Naive thymus-derived CD4-positive, alpha-beta T cell (primary cell): ENCODE measurements at regions of chr10 and their contacts with region 1.

Region 1: DNA sequence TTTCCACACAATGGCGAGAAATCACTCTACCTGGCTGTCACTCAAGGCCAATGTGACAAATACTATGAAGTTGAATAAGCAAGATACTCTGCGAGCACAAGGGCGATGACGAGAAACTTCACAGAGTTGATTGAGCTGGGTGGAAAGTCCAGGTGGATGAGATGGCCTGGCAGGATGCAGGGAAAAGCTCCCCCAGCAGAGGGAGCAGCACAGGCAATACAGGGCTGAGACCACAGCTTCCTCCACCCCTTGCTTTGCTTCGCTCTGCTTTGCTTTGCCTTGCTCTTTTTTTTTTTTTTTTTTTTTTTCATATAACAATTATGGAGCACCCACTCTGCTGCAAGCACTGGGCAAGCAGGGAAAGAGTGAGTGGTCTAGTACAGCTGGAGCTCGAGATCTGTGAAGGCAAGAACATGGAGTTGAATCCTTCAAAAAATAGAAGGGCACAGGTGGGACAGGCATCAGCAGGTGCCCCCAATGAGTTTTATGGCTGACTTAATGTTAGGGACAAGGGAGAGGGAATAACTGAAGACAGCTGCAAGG is 88.3 kb downstream of the CABCOCO1 start:
- DNase-seq: peak; percentile 37 to 67 (median 58)
- ATAC-seq: peak; percentile 94
- H3K4me3 ChIP-seq: no peak overlapping the region
- H3K4me3 Mint-ChIP-seq: peak overlapping the region in 6 of 10 donors; percentile 6 to 58 (median 36)
- H3K27ac ChIP-seq: no peak overlapping the region
- H3K27ac Mint-ChIP-seq: peak overlapping the region in 4 of 9 donors; percentile 10 to 88 (median 48)
- H3K4me1 ChIP-seq: peaks cover 12 to 15% of the 10 kb centered on the region in 2 donors
- H3K4me1 Mint-ChIP-seq: peaks cover 0 to 29% (median 26%) of the 10 kb centered on the region in 7 donors
- H3K27me3 ChIP-seq: no peaks in the 10 kb centered on the region
- H3K27me3 Mint-ChIP-seq: peaks cover 0 to 4% (median 0%) of the 10 kb centered on the region in 5 donors

Region 2: GRCh38 chr10:61765176-61766087 is 14.4 kb after region 1 on chr10:
- CTCF ChIA-PET with region 1: interaction called, 7 read pairs
- POLR2A ChIA-PET with region 1: no interaction called
- intact Hi-C with region 1: loop called in 1 of 2 experiments (anchors 1 kb)
- DNase-seq: peak in 6 of 9 donors; percentile 11 to 53 (median 42)
- ATAC-seq: peak; percentile 88
- H3K4me3 ChIP-seq: no peak overlapping the region
- H3K4me3 Mint-ChIP-seq: peak overlapping the region in 8 of 10 donors; percentile 33 to 75 (median 56)
- H3K27ac ChIP-seq: peak overlapping the region; percentile 41
- H3K27ac Mint-ChIP-seq: peak overlapping the region; percentile 60 to 92 (median 82)
- H3K4me1 ChIP-seq: peaks cover 6 to 8% of the 10 kb centered on the region in 2 donors
- H3K4me1 Mint-ChIP-seq: peaks cover 3 to 27% (median 18%) of the 10 kb centered on the region in 7 donors
- H3K27me3 ChIP-seq: no peaks in the 10 kb centered on the region
- H3K27me3 Mint-ChIP-seq: peaks cover 0 to 2% (median 0%) of the 10 kb centered on the region in 5 donors

Region 3: DNA sequence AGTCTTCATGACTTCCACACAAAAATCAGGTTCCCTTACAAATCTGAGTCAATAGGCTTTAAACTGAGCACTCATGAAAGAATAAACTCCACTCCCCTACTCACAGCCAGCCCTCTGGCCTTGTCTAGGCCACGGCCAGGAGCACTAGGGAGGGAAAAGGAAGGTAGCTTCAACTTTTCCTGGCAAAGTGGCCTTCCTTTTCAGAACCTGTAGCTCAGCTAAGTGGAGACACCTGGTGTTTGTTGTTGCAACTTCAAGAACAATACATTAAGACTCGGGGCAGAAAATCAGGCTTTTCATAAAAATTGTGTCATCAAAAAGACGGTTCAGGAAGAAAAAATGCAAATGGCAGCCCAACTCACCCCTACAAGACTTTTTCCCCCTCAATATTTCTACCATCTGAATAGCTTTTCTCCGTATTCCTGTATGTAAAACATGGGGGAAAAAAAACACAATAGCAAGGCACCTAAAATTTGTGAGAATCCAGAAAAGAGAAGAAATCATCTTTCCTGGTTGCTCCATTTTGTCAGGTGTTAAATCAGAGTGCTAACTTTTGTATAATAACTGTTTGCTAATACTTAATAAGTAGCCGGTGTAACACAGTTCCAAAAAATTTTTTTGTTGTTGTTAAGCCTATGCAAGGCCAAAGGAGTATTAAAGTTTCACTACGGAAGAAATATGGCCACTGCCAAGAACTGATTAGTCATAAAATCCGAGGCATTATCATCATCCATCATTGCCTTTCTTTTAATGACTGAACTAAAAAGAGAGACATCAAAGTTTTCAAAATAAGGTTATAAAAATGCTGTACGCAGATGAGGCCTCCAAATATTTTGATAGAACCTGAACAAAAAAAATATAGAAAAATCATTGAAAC is 84.3 kb after region 1 on chr10:
- CTCF ChIA-PET with region 1: interaction called, 18 read pairs
- POLR2A ChIA-PET with region 1: no interaction called
- intact Hi-C with region 1: loop called (anchors 1 kb)
- DNase-seq: peak in 4 of 9 donors; percentile 5 to 30 (median 14)
- ATAC-seq: no peak
- H3K4me3 ChIP-seq: no peak overlapping the region
- H3K4me3 Mint-ChIP-seq: no peak overlapping the region
- H3K27ac ChIP-seq: no peak overlapping the region
- H3K27ac Mint-ChIP-seq: peak overlapping the region in 1 of 9 donors; percentile 10
- H3K4me1 ChIP-seq: no peaks in the 10 kb centered on the region
- H3K4me1 Mint-ChIP-seq: peaks cover 0 to 15% (median 5%) of the 10 kb centered on the region in 7 donors
- H3K27me3 ChIP-seq: no peaks in the 10 kb centered on the region
- H3K27me3 Mint-ChIP-seq: peaks cover 0 to 4% (median 0%) of the 10 kb centered on the region in 5 donors

Region 4: DNA sequence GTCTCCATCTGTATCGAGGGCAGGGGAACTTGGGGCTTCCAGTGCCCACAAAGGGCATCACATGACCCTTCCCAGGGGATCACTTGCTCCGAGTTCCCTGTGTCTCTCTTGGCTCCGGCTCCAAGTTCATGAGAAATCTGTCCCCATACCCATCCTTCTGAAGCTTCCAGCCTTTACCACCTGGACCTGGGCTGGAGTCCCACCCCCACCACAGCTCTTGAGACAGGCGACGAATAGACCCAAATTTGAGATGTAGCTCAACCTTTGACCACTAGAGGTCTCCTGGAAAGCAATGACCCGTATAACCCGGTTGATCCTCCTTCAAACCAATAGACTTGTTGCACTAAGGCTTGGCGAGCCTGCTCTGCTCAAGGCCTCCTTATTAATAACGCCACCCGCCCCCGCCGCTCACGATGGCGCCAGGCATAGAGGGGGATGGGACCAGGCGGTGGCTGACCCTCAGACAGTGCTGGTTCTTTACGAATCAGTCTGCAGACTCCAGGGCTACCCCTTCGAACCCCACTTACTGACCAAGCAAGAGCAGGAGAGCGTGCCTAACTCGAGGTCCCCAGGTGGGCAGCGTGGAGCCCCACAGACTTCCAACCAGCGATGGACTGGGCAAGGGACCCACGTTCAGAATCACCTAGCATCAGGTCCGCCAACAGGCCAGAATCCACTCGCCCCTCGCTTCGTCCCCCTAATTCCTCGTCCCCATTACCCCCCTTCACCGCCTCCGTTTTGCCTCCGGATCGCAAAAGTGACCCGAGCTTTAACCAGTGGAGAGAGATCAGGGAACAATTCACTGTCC is 146.1 kb after region 1 on chr10:
- CTCF ChIA-PET with region 1: interaction called, 10 read pairs
- POLR2A ChIA-PET with region 1: interaction called, 3 read pairs
- intact Hi-C with region 1: loop called (anchors 1 kb)
- DNase-seq: peak; percentile 20 to 76 (median 66)
- ATAC-seq: peak; percentile 80
- H3K4me3 ChIP-seq: peak overlapping the region; percentile 51
- H3K4me3 Mint-ChIP-seq: peak overlapping the region; percentile 77 to 98 (median 86)
- H3K27ac ChIP-seq: no peak overlapping the region
- H3K27ac Mint-ChIP-seq: peak overlapping the region; percentile 46 to 99 (median 86)
- H3K4me1 ChIP-seq: peaks cover 18 to 27% of the 10 kb centered on the region in 2 donors
- H3K4me1 Mint-ChIP-seq: peaks cover 12 to 35% (median 33%) of the 10 kb centered on the region in 7 donors
- H3K27me3 ChIP-seq: no peaks in the 10 kb centered on the region
- H3K27me3 Mint-ChIP-seq: no peaks in the 10 kb centered on the region

Region 5: GRCh38 chr10:61921143-61921542 is 170.1 kb after region 1 on chr10:
- CTCF ChIA-PET with region 1: no interaction called
- POLR2A ChIA-PET with region 1: no interaction called
- intact Hi-C with region 1: no loop called
- DNase-seq: no peak
- ATAC-seq: no peak
- H3K4me3 ChIP-seq: no peak overlapping the region
- H3K4me3 Mint-ChIP-seq: no peak overlapping the region
- H3K27ac ChIP-seq: no peak overlapping the region
- H3K27ac Mint-ChIP-seq: peak overlapping the region in 2 of 9 donors; percentile 33 to 36
- H3K4me1 ChIP-seq: no peaks in the 10 kb centered on the region
- H3K4me1 Mint-ChIP-seq: peaks cover 34 to 81% (median 67%) of the 10 kb centered on the region in 7 donors
- H3K27me3 ChIP-seq: no peaks in the 10 kb centered on the region
- H3K27me3 Mint-ChIP-seq: no peaks in the 10 kb centered on the region

Region 6: DNA sequence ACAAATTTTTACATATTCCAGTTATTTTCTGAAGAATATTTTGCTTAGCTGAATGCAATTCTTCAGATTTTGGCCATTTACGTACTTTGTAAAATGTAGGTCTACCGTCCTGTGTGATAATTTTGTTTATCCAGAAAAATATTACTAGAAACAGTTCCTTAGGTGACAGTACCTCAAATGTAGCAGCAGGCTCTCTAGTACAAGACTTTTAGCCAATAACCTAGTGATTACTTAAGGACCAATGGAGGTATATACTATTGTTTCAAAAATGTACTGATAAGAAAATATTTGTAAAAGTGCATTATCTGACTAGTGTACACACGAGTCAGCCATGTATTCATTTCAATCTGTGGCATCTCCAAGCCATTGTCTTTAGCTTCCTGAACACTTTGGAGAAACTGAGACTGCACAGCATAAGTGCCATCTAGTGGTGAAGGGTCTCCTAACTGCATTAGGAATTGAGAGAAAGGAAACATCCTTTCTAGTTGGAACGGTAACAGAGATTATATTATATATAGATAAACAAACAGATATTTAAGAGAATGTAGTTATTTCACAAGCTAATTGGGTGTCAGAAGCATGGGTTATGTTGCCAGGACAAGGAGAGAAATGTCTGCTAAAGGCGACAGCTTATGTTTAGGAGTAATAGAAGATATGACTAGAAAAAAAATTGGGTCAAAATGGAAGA is 493.9 kb after region 1 on chr10:
- CTCF ChIA-PET with region 1: interaction called, 4 read pairs
- POLR2A ChIA-PET with region 1: interaction called, 3 read pairs
- intact Hi-C with region 1: loop called (anchors 1 kb)
- DNase-seq: peak in 8 of 9 donors; percentile 35 to 80 (median 68)
- ATAC-seq: peak; percentile 94
- H3K4me3 ChIP-seq: no peak overlapping the region
- H3K4me3 Mint-ChIP-seq: peak overlapping the region in 6 of 10 donors; percentile 16 to 64 (median 42)
- H3K27ac ChIP-seq: no peak overlapping the region
- H3K27ac Mint-ChIP-seq: peak overlapping the region in 8 of 9 donors; percentile 6 to 85 (median 53)
- H3K4me1 ChIP-seq: peaks cover 6 to 9% of the 10 kb centered on the region in 2 donors
- H3K4me1 Mint-ChIP-seq: peaks cover 9 to 37% (median 30%) of the 10 kb centered on the region in 7 donors
- H3K27me3 ChIP-seq: no peaks in the 10 kb centered on the region
- H3K27me3 Mint-ChIP-seq: no peaks in the 10 kb centered on the region

Region 7: DNA sequence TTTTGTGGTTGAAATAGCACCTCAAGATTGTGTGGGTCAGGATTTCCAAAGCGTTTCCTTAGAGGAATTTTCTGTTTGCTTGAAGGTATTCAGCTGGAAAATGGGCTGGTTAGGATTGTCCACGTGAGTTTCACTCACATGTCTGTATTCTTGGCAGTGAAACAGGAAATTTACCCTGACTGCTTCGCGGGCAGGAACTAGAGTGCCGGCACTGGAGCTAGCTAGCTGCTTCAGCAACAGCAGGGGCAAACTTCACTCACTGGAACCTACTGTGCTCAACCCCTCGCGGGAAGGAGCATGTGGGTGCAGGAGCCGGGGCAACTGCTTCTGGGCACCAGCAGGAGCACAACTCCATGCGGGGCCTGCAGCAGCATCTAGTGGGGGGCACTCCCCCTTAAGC is 555.7 kb after region 1 on chr10:
- CTCF ChIA-PET with region 1: no interaction called
- POLR2A ChIA-PET with region 1: no interaction called
- intact Hi-C with region 1: loop called in 1 of 2 experiments (anchors 10 kb)
- DNase-seq: peak in 7 of 9 donors; percentile 7 to 38 (median 24)
- ATAC-seq: peak; percentile 62
- H3K4me3 ChIP-seq: no peak overlapping the region
- H3K4me3 Mint-ChIP-seq: peak overlapping the region in 8 of 10 donors; percentile 16 to 66 (median 45)
- H3K27ac ChIP-seq: no peak overlapping the region
- H3K27ac Mint-ChIP-seq: peak overlapping the region in 5 of 9 donors; percentile 13 to 53 (median 46)
- H3K4me1 ChIP-seq: peaks cover 9 to 30% of the 10 kb centered on the region in 2 donors
- H3K4me1 Mint-ChIP-seq: peaks cover 5 to 47% (median 34%) of the 10 kb centered on the region in 7 donors
- H3K27me3 ChIP-seq: no peaks in the 10 kb centered on the region
- H3K27me3 Mint-ChIP-seq: peaks cover 0 to 7% (median 0%) of the 10 kb centered on the region in 5 donors